ENCODE measurements at regions of chrX and their contacts with region 1.

Region 1: DNA sequence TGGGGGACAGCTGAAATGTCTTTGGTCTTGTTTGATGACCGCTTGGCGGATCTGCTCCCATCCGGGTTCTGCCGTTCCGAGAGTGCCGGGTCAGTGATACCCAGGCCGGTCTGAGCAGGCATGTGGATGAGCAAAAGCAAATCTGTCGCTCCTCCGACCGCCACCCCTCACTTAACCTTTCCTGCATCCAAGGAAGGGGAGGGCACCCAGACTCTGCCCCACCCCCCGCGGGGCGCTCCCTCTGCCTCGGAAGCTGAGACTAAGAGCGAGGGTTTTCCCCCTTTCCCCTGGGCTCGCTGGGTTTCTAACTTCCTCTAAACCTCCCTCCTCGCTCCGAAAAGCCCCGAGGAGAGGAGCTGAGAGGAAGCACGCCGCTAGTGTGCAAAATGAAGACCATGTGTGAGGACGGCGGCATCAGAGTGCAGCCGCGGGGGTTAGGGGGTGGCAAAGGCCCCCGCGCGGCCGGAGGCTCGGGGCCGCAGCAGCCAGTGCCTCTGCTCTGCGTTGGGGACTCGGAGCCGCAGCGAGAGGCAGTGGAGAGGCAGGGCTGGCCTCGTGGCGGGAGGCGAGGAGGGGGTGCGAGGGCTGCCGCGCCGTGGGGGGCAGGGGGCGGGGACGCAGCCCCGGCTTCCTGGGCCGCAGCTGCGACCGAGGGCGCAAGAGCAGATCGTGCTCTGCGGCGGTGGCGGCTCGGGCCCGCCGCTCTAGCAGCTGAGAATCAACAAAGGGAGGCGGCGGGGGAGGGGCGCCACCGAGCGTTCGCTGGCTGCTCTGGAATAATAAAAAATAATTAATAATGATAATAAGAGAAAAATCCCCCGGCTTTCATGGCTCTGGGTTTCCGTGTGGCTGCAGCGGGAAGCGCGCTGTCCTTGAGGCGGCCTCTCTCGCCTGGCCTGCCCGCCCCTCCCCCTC is 55.8 kb upstream of the BCOR start:
- DNase-seq: peak; percentile 87
- ATAC-seq: peak; percentile 82
- H3K4me3 Mint-ChIP-seq: peak overlapping the region; percentile 70
- H3K27ac Mint-ChIP-seq: peak overlapping the region; percentile 37
- H3K4me1 Mint-ChIP-seq: peaks cover 13% of the 10 kb centered on the region
- H3K27me3 Mint-ChIP-seq: no peaks in the 10 kb centered on the region

Region 2: DNA sequence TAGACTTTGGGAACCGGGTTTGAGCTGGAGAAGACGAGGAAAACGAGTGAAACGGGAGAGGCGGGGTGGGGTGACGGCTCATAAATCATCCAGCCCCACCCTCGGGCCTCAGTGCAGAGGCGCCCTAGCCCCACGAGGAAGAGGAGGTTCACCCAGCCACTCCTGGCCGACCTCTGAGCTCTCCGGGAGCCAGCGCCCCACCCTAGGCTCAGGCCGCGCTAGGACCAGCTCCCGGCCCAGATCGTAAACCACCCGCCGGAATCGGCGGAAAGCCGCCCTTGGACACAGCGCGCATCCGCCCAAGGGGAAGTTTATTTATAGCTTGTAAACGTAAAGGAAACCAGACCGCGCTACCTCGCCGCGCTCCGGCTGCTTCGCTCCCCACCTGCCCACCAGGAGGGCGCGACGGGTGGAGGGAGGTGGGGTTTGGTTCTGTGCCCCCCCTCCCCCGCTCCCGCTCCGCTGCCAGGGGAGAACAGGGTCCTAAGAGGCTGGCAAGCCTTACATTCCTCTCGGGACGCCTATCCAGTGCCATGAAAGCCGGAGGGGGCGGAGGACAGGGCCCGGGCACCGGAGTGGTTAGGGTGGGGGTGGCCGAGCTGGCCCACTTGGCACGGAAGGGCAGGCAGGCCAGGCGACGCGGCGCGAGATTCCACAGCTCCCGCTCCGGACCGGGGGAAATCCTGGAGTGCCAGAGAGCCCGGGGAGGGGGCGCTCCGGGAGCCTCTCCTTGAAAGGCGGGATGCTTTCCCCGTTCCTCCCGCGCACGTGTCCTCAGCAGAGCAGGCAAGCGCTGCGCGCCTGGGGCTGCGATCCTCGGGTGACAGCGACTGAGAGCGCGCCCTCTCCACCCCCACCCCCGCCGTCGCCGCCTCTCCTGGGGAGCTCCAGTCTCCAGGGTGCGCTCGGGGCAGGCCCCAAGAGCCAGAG is 140.1 kb before region 1 on chrX:
- CTCF ChIA-PET with region 1: no interaction called
- POLR2A ChIA-PET with region 1: no interaction called
- intact Hi-C with region 1: loop called in 1 of 2 experiments (anchors 5 kb)
- DNase-seq: peak; percentile 58
- ATAC-seq: peak; percentile 35
- H3K4me3 Mint-ChIP-seq: peak overlapping the region; percentile 63
- H3K27ac Mint-ChIP-seq: peak overlapping the region; percentile 31
- H3K4me1 Mint-ChIP-seq: peaks cover 25% of the 10 kb centered on the region
- H3K27me3 Mint-ChIP-seq: peaks cover 16% of the 10 kb centered on the region

Region 3: GRCh38 chrX:40108959-40109287 is 44.7 kb before region 1 on chrX:
- CTCF ChIA-PET with region 1: no interaction called
- POLR2A ChIA-PET with region 1: interaction called, 3 read pairs
- intact Hi-C with region 1: loop called (anchors 1 to 5 kb)
- DNase-seq: peak; percentile 83
- ATAC-seq: peak; percentile 60
- H3K4me3 Mint-ChIP-seq: peak overlapping the region; percentile 46
- H3K27ac Mint-ChIP-seq: no peak overlapping the region
- H3K4me1 Mint-ChIP-seq: peaks cover 9% of the 10 kb centered on the region
- H3K27me3 Mint-ChIP-seq: peaks cover 4% of the 10 kb centered on the region

Region 4: DNA sequence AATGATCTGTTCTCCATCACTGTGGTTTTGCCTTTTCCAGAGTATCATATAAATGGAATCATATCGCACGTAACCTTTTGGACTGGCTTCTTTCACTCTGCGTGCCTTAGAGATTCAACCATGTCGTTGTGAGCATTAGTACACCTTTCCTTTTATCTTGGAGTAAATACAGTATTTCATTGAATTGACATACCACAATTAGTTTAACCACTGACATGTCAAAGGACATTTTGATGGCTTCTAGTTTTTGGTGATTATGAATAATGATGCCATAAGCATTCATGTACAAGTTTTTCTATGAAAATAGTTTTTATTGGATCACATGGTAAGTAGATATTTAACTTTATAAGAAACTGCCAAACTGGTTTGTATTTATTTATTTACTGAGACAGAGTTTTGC is 1215.6 kb after region 1 on chrX:
- CTCF ChIA-PET with region 1: no interaction called
- POLR2A ChIA-PET with region 1: no interaction called
- intact Hi-C with region 1: no loop called
- DNase-seq: no peak
- ATAC-seq: no peak
- H3K4me3 Mint-ChIP-seq: no peak overlapping the region
- H3K27ac Mint-ChIP-seq: no peak overlapping the region
- H3K4me1 Mint-ChIP-seq: peaks cover 2% of the 10 kb centered on the region
- H3K27me3 Mint-ChIP-seq: no peaks in the 10 kb centered on the region

Measured in activated CD4-positive, alpha-beta T cell treated with anti-CD3 and anti-CD28 coated beads for 36 hours (primary cell).